ENCODE measurements at regions of chr17 and their contacts with region 1.

Region 1: GRCh38 chr17:68777243-68777855 is 176.2 kb upstream of the FAM20A start:
- DNase-seq: peak; percentile 49
- H3K4me3 Mint-ChIP-seq: no peak overlapping the region
- H3K27ac Mint-ChIP-seq: no peak overlapping the region
- H3K4me1 Mint-ChIP-seq: no peaks in the 10 kb centered on the region
- H3K27me3 Mint-ChIP-seq: peaks cover 5% of the 10 kb centered on the region

Region 2: GRCh38 chr17:68600067-68600930 is 177.1 kb before region 1 on chr17:
- CTCF ChIA-PET with region 1: no interaction called
- intact Hi-C with region 1: no loop called
- DNase-seq: peak; percentile 10
- H3K4me3 Mint-ChIP-seq: peak overlapping the region; percentile 35
- H3K27ac Mint-ChIP-seq: no peak overlapping the region
- H3K4me1 Mint-ChIP-seq: peaks cover 14% of the 10 kb centered on the region
- H3K27me3 Mint-ChIP-seq: peaks cover 62% of the 10 kb centered on the region

Region 3: GRCh38 chr17:68910251-68910705 is 132.9 kb after region 1 on chr17:
- CTCF ChIA-PET with region 1: no interaction called
- intact Hi-C with region 1: loop called (anchors 5 kb)
- DNase-seq: no peak
- H3K4me3 Mint-ChIP-seq: no peak overlapping the region
- H3K27ac Mint-ChIP-seq: no peak overlapping the region
- H3K4me1 Mint-ChIP-seq: no peaks in the 10 kb centered on the region
- H3K27me3 Mint-ChIP-seq: peaks cover 2% of the 10 kb centered on the region

Region 4: DNA sequence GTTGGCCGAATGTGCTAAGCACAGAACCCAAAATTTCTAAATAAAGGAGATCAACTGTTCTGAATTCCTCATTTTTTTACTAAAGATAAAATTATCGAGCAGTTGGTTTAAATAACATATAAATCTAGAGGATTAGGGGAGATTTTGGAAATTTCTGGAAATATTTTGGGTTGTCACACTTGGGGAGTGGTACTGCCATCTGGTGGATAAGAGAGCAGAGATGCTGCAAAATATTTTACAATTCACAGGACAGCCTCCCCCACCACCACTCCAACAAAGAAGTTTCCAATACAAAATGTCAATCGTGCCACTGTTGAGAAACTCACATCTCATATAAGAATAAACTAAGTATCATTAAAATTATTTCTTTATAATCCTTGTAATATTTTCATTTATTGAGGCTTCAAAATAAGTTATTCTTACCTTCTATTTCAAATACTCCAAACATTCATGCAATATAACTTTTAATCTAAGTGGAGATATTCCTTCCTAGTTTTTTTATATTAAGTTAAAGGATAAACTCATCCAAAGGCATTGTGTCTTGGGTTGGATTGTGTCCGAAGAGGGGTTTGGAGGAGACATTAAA is 194.9 kb after region 1 on chr17:
- CTCF ChIA-PET with region 1: no interaction called
- intact Hi-C with region 1: loop called (anchors 5 kb)
- DNase-seq: no peak
- H3K4me3 Mint-ChIP-seq: no peak overlapping the region
- H3K27ac Mint-ChIP-seq: no peak overlapping the region
- H3K4me1 Mint-ChIP-seq: no peaks in the 10 kb centered on the region
- H3K27me3 Mint-ChIP-seq: peaks cover 4% of the 10 kb centered on the region

Region 5: GRCh38 chr17:69235338-69235930 is 458.1 kb after region 1 on chr17:
- CTCF ChIA-PET with region 1: interaction called, 3 read pairs
- intact Hi-C with region 1: loop called (anchors 1 kb)
- DNase-seq: peak; percentile 76
- H3K4me3 Mint-ChIP-seq: no peak overlapping the region
- H3K27ac Mint-ChIP-seq: no peak overlapping the region
- H3K4me1 Mint-ChIP-seq: no peaks in the 10 kb centered on the region
- H3K27me3 Mint-ChIP-seq: no peaks in the 10 kb centered on the region

Measured in activated naive CD4-positive, alpha-beta T cell treated with anti-CD3 and anti-CD28 coated beads for 36 hours (primary cell).